ENCODE measurements at regions of chr6 and their contacts with region 1.

Region 1: GRCh38 chr6:26196846-26197648 is 109.8 kb downstream of the HFE start:
- DNase-seq: peak; percentile 85
- H3K4me3 Mint-ChIP-seq: peak overlapping the region; percentile 93
- H3K27ac Mint-ChIP-seq: peak overlapping the region; percentile 96
- H3K4me1 Mint-ChIP-seq: peaks cover 49% of the 10 kb centered on the region
- H3K27me3 Mint-ChIP-seq: no peaks in the 10 kb centered on the region

Region 2: DNA sequence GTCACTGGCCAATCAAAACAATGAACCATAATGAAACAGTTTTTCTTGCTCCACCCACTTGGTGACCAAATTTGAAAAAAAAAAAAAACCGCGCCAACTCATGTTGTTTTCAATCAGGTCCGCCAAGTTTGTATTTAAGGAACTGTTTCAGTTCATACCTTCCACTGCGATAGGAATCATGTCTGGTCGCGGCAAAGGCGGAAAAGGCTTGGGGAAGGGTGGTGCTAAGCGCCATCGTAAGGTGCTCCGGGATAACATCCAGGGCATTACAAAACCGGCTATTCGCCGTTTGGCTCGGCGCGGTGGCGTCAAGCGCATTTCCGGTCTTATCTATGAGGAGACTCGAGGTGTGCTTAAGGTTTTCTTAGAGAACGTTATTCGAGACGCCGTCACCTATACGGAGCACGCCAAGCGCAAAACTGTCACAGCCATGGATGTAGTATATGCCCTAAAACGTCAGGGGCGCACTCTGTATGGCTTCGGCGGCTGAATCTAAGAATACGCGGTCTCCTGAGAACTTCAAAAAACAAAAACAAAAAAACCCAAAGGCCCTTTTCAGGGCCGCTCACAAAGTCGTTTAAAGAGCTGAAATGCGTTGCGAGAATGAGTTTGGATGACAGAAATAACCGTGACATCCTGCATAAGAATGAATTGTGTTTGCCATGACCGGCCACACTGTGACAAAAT is 93.1 kb before region 1 on chr6:
- CTCF ChIA-PET with region 1: interaction called, 4 read pairs
- POLR2A ChIA-PET with region 1: interaction called, 42 read pairs
- DNase-seq: peak; percentile 93
- H3K4me3 Mint-ChIP-seq: peak overlapping the region; percentile 80
- H3K27ac Mint-ChIP-seq: peak overlapping the region; percentile 99
- H3K4me1 Mint-ChIP-seq: peaks cover 23% of the 10 kb centered on the region
- H3K27me3 Mint-ChIP-seq: no peaks in the 10 kb centered on the region

Region 3: GRCh38 chr6:26183581-26184366 is 13.3 kb before region 1 on chr6:
- CTCF ChIA-PET with region 1: interaction called, 42 read pairs
- POLR2A ChIA-PET with region 1: interaction called, 992 read pairs
- DNase-seq: peak; percentile 78
- H3K4me3 Mint-ChIP-seq: peak overlapping the region; percentile 75
- H3K27ac Mint-ChIP-seq: peak overlapping the region; percentile 92
- H3K4me1 Mint-ChIP-seq: peaks cover 71% of the 10 kb centered on the region
- H3K27me3 Mint-ChIP-seq: no peaks in the 10 kb centered on the region

Region 4: GRCh38 chr6:26240154-26241032 is 43.3 kb after region 1 on chr6:
- CTCF ChIA-PET with region 1: interaction called, 16 read pairs
- POLR2A ChIA-PET with region 1: interaction called, 600 read pairs
- DNase-seq: peak; percentile 87
- H3K4me3 Mint-ChIP-seq: peak overlapping the region; percentile 71
- H3K27ac Mint-ChIP-seq: peak overlapping the region; percentile 94
- H3K4me1 Mint-ChIP-seq: peaks cover 42% of the 10 kb centered on the region
- H3K27me3 Mint-ChIP-seq: no peaks in the 10 kb centered on the region

Region 5: DNA sequence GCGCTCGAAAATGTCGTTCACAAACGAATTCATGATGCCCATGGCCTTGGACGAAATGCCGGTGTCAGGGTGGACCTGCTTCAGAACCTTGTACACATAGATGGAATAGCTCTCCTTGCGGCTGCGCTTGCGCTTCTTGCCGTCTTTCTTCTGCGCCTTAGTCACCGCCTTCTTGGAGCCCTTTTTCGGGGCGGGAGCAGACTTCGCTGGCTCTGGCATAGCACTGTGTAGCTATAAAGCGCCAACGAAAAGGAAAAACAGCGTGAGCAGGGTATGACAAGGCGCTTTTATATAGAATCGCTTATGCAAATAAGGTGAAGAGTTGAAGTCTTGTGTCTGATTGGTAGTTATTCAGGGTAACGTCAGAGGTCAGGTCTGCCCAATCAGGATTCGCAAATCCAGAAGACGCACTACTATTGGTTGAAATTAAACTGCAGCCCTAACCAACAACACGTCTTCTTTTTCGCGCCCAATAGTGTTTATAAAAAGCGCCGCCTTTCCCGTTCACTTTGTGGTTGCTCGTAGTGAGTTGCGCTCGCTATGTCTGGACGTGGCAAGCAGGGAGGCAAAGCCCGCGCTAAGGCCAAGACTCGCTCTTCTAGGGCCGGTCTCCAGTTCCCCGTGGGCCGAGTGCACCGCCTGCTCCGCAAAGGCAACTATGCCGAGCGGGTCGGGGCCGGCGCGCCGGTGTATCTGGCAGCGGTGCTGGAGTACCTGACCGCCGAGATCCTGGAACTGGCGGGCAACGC is 935.7 kb after region 1 on chr6:
- CTCF ChIA-PET with region 1: no interaction called
- POLR2A ChIA-PET with region 1: interaction called, 118 read pairs
- DNase-seq: peak; percentile 95
- H3K4me3 Mint-ChIP-seq: no peak overlapping the region
- H3K27ac Mint-ChIP-seq: no peak overlapping the region
- H3K4me1 Mint-ChIP-seq: peaks cover 60% of the 10 kb centered on the region
- H3K27me3 Mint-ChIP-seq: no peaks in the 10 kb centered on the region

Region 6: GRCh38 chr6:27838058-27838944 is 1641.3 kb after region 1 on chr6:
- CTCF ChIA-PET with region 1: no interaction called
- POLR2A ChIA-PET with region 1: interaction called, 46 read pairs
- DNase-seq: peak; percentile 90
- H3K4me3 Mint-ChIP-seq: no peak overlapping the region
- H3K27ac Mint-ChIP-seq: no peak overlapping the region
- H3K4me1 Mint-ChIP-seq: peaks cover 31% of the 10 kb centered on the region
- H3K27me3 Mint-ChIP-seq: no peaks in the 10 kb centered on the region

Measured in activated CD4-positive, alpha-beta memory T cell treated with anti-CD3 and anti-CD28 coated beads, Interleukin-2, amount 10 ng/mL, durations not matched to agents 7 days and 5 days (primary cell).